Activated CD4-positive, alpha-beta T cell treated with anti-CD3 and anti-CD28 coated beads, Interleukin-2, amount 10 ng/mL, durations not matched to agents 7 days and 5 days (primary cell): ENCODE measurements at regions of chr3 and their contacts with region 1.

Region 1: DNA sequence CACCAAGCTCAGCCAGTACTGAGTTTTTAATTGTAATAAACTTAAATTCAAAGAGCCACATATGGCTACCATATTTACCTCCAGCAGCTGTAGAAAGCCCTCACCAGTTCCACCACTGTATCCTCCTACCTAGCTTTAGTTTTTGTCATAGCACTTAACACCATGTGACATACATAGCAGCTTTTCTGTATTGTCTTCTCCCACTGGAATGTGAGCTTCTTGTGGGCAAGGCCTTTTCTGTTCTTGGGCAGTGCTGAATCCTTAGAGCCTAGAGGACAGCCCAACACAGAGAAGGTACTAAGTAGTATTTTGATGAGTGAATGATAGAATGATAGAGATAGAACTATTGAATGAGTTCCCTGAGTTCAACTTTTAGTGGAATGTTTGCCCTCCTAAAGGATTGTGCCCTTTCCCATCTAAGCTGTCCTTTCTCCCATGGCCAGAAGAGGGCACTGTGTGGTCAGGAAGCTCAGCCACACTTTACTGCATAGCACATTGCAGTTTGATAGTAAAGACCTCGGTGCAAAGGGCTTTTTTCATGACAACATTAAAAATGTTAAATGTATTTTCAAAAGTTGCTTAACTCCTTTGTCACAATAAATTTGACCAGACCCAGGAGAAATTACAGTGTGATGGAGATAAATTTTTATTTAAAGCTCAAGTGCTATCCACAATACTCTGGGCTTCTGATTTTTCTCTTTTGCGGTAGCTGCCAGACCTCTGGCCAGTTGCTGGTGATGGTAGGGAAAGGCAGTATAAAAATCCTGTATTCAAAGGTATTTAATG is 115.8 kb downstream of the GHSR start:
- DNase-seq: peak; percentile 60
- H3K4me3 Mint-ChIP-seq: no peak overlapping the region
- H3K27ac Mint-ChIP-seq: no peak overlapping the region
- H3K4me1 Mint-ChIP-seq: peaks cover 6% of the 10 kb centered on the region
- H3K27me3 Mint-ChIP-seq: no peaks in the 10 kb centered on the region

Region 2: GRCh38 chr3:172270557-172271166 is 61.8 kb before region 1 on chr3:
- CTCF ChIA-PET with region 1: no interaction called
- POLR2A ChIA-PET with region 1: no interaction called
- DNase-seq: no peak
- H3K4me3 Mint-ChIP-seq: no peak overlapping the region
- H3K27ac Mint-ChIP-seq: no peak overlapping the region
- H3K4me1 Mint-ChIP-seq: no peaks in the 10 kb centered on the region
- H3K27me3 Mint-ChIP-seq: no peaks in the 10 kb centered on the region

Region 3: DNA sequence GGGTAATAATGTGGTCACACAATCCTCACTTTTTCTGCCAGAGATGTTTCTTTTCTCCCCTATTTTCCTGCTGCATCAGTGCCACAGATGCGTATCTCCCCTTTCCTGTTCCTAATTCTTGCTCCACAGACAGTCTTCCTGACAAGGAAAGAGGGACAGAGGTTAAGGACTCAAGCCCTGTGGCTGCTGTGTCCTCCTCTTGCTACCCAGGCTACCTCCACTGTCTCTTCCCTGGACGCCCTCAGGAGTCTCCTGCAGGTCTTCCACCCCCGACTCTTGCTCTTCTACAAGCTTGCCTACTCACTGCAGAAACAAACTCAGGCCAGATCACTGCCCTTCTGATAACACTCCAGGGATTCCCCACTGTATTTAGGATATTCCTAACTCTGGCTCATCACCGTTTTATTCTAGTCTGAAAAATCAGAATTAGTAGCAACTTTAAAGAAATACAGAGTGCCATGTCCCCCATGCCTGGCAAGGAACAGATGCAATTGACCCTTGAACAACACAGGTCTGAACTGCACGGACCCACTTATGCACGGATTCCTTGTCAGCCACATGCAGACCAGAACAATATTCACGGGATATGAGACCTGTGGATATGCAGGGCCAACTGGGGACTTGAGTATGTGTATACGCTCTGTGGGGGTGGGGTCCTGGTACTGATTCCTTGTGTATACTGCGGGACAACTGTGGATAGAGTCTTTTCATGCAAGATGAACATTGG is 36.0 kb before region 1 on chr3:
- CTCF ChIA-PET with region 1: no interaction called
- POLR2A ChIA-PET with region 1: no interaction called
- DNase-seq: no peak
- H3K4me3 Mint-ChIP-seq: no peak overlapping the region
- H3K27ac Mint-ChIP-seq: no peak overlapping the region
- H3K4me1 Mint-ChIP-seq: no peaks in the 10 kb centered on the region
- H3K27me3 Mint-ChIP-seq: no peaks in the 10 kb centered on the region

Region 4: DNA sequence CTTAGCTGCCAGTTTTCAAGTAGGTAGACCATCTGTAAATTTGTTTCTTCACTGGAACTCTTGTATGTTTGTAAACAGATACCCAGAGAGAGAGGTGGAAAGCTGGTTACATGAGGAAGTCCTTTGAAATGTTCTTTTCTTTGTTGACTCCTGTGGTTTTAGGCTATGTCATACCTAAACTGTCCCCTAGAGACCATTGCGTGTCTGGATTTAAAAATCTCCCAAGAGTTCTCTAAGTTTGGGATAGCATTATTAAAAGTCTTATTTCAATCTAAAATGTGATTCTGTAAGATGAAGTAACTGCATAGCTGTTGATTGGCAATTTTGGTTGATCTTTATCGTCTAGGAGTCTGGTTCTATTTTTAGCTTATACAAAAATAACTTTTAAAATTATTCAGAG is 11.4 kb before region 1 on chr3:
- CTCF ChIA-PET with region 1: interaction called, 14 read pairs
- POLR2A ChIA-PET with region 1: no interaction called
- DNase-seq: no peak
- H3K4me3 Mint-ChIP-seq: no peak overlapping the region
- H3K27ac Mint-ChIP-seq: no peak overlapping the region
- H3K4me1 Mint-ChIP-seq: peaks cover 3% of the 10 kb centered on the region
- H3K27me3 Mint-ChIP-seq: no peaks in the 10 kb centered on the region

Region 5: GRCh38 chr3:172666873-172667694 is 334.6 kb after region 1 on chr3:
- CTCF ChIA-PET with region 1: interaction called, 30 read pairs
- POLR2A ChIA-PET with region 1: no interaction called
- DNase-seq: peak; percentile 90
- H3K4me3 Mint-ChIP-seq: no peak overlapping the region
- H3K27ac Mint-ChIP-seq: peak overlapping the region; percentile 28
- H3K4me1 Mint-ChIP-seq: peaks cover 25% of the 10 kb centered on the region
- H3K27me3 Mint-ChIP-seq: peaks cover 5% of the 10 kb centered on the region